B cell (primary cell): ENCODE measurements at regions of chr1 and their contacts with region 1.

Region 1: DNA sequence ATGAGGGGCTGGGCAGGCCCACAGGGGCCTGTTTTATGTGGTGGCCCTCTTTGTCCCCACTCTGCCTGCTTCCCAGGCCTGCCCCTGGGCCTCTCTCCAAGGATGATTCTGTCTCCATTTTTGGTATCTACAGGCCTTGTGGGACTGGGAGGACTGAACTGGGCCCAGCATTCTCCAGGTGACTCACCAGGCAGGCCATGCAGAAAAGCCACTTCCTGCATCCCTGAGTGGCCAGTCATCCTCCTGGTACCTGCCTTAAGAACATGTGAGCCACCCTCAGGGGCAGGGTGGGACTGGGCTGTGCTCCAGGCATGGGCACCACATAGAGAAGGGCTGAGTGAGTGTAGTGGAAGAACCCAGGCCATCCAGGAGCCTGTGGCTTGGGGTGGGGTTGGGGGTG is 20.0 kb upstream of the BCAR3 start:
- DNase-seq: no peak
- ATAC-seq: no peak
- H3K4me3 ChIP-seq: no peak overlapping the region
- H3K4me3 Mint-ChIP-seq: peak overlapping the region; percentile 26
- H3K27ac ChIP-seq: no peak overlapping the region
- H3K27ac Mint-ChIP-seq: peak overlapping the region; percentile 88
- H3K4me1 ChIP-seq: peaks cover 54 to 61% of the 10 kb centered on the region in 2 donors
- H3K4me1 Mint-ChIP-seq: peaks cover 62% of the 10 kb centered on the region
- H3K27me3 ChIP-seq: no peaks in the 10 kb centered on the region
- H3K27me3 Mint-ChIP-seq: no peaks in the 10 kb centered on the region
- CTCF ChIP-seq: no peak

Region 2: GRCh38 chr1:93328809-93329760 is 372.5 kb before region 1 on chr1:
- CTCF ChIA-PET with region 1: no interaction called
- POLR2A ChIA-PET with region 1: interaction called, 10 read pairs
- intact Hi-C with region 1: no loop called
- DNase-seq: no peak
- ATAC-seq: no peak
- H3K4me3 ChIP-seq: no peak overlapping the region
- H3K4me3 Mint-ChIP-seq: no peak overlapping the region
- H3K27ac ChIP-seq: no peak overlapping the region
- H3K27ac Mint-ChIP-seq: no peak overlapping the region
- H3K4me1 ChIP-seq: no peaks in the 10 kb centered on the region
- H3K4me1 Mint-ChIP-seq: no peaks in the 10 kb centered on the region
- H3K27me3 ChIP-seq: no peaks in the 10 kb centered on the region
- H3K27me3 Mint-ChIP-seq: no peaks in the 10 kb centered on the region
- CTCF ChIP-seq: no peak

Region 3: DNA sequence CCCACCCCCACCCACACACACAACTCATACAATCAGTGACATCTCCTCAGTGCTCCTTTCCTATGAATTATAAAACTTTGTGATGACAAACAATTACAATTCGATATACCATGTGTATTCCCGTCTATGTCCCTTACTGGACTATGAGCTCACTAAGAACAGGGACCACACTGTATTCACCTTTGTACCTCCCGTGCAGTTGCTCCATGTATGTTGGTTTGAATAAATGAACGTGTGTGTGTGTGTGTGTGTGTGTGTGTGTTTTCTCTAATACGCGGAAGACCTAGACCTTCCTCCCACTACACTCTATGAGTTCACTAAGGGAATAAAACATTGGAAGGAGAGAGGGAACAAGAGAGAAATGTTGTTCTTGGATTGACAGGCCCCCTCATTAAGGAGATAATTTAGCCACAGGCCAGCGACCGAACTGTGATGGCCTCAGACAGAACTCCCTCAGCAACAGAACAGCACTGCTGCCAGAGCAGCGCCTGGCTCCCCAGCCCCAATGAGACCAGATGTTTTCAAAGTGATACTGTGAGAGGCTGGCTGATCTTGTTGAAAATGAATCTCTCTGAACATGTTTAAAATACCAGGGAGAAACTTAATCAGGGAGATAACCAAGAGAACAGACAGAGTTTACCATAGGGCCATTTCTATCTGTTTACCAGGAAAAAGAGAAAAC is 41.7 kb before region 1 on chr1:
- CTCF ChIA-PET with region 1: no interaction called
- POLR2A ChIA-PET with region 1: no interaction called
- intact Hi-C with region 1: no loop called
- DNase-seq: no peak
- ATAC-seq: no peak
- H3K4me3 ChIP-seq: no peak overlapping the region
- H3K4me3 Mint-ChIP-seq: no peak overlapping the region
- H3K27ac ChIP-seq: no peak overlapping the region
- H3K27ac Mint-ChIP-seq: no peak overlapping the region
- H3K4me1 ChIP-seq: no peaks in the 10 kb centered on the region
- H3K4me1 Mint-ChIP-seq: peaks cover 20% of the 10 kb centered on the region
- H3K27me3 ChIP-seq: no peaks in the 10 kb centered on the region
- H3K27me3 Mint-ChIP-seq: no peaks in the 10 kb centered on the region
- CTCF ChIP-seq: no peak

Region 4: DNA sequence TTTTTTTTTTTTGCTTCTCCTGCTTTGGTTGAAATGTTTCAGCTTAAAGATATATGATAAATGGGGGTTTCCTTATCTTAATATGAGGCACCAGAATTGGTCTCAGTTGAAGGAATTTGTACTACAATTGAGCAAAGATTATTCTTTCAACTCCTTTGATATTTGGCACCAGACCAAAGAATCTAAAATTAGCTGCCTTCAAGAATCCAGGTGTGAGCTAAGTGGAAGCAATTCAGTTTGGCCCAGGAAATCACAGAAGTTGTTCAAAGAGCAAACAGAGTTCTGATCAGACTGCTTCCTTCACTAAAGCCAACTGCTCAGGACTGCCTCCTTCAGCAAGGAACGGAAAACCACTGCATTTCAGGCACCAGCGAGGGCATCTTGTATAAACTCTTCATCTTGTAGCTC is 48.3 kb after region 1 on chr1:
- CTCF ChIA-PET with region 1: interaction called, 6 read pairs
- POLR2A ChIA-PET with region 1: no interaction called
- intact Hi-C with region 1: loop called (anchors 1 kb)
- DNase-seq: peak; percentile 82
- ATAC-seq: peak; percentile 48
- H3K4me3 ChIP-seq: peak overlapping the region in 2 of 5 experiments; percentile 5 to 40
- H3K4me3 Mint-ChIP-seq: peak overlapping the region; percentile 73
- H3K27ac ChIP-seq: peak overlapping the region; percentile 86 to 87
- H3K27ac Mint-ChIP-seq: peak overlapping the region; percentile 93
- H3K4me1 ChIP-seq: peaks cover 34 to 41% of the 10 kb centered on the region in 2 donors
- H3K4me1 Mint-ChIP-seq: peaks cover 55% of the 10 kb centered on the region
- H3K27me3 ChIP-seq: no peaks in the 10 kb centered on the region
- H3K27me3 Mint-ChIP-seq: no peaks in the 10 kb centered on the region
- CTCF ChIP-seq: peak; percentile 56

Region 5: DNA sequence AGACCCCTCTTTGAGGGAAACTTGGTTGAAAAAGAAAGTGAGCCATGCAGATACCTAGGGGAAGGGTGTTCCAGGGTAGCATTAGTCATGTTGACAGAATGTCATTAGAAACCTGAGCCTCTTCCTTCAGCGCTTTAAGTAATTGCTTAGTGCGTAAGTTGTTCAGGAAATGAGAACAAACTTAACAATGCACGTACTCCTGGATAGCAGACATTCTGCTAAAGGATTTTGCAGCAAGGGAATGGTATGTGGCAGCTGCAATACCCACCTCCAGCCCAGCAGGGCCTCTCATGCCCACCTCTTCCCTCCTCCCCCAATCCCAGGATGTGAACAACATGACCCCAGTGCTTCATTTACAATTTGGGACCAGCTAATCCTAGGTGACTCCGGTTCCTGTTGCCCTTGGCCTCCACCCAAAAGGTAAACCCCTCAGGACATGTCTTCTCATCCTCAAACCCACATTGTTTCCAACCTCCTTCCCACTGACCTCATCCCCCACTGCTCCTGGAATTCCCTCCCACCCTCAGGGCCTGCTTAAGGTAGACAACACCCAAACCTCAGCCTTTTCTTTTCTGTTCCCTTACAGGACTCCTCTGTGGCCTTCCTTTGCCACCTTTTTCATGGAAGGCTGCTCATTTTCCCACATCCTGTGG is 78.0 kb after region 1 on chr1:
- CTCF ChIA-PET with region 1: no interaction called
- POLR2A ChIA-PET with region 1: no interaction called
- intact Hi-C with region 1: no loop called
- DNase-seq: no peak
- ATAC-seq: no peak
- H3K4me3 ChIP-seq: no peak overlapping the region
- H3K4me3 Mint-ChIP-seq: no peak overlapping the region
- H3K27ac ChIP-seq: no peak overlapping the region
- H3K27ac Mint-ChIP-seq: no peak overlapping the region
- H3K4me1 ChIP-seq: no peaks in the 10 kb centered on the region
- H3K4me1 Mint-ChIP-seq: no peaks in the 10 kb centered on the region
- H3K27me3 ChIP-seq: no peaks in the 10 kb centered on the region
- H3K27me3 Mint-ChIP-seq: no peaks in the 10 kb centered on the region
- CTCF ChIP-seq: no peak

Region 6: DNA sequence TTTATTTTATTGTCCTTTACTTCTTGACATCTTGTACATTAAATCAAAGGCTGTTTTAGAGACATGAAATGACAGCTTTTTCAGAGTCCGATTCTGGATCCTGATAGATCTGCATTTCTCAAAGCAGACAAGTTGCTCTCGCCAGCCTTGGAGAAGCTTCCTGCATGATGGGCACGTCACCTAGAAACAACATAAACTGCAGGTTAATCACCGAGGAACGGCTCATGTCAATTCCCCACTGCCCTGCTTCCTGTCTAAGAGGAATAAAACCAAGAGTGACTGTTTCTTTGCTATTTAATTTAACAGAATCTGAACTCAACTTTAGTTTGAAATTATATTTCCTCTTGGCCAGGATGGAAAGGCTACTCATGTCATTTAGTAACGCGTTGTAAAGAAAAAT is 1609.4 kb after region 1 on chr1:
- CTCF ChIA-PET with region 1: no interaction called
- POLR2A ChIA-PET with region 1: no interaction called
- intact Hi-C with region 1: no loop called
- DNase-seq: no peak
- ATAC-seq: no peak
- H3K4me3 ChIP-seq: no peak overlapping the region
- H3K4me3 Mint-ChIP-seq: no peak overlapping the region
- H3K27ac ChIP-seq: no peak overlapping the region
- H3K27ac Mint-ChIP-seq: no peak overlapping the region
- H3K4me1 ChIP-seq: no peaks in the 10 kb centered on the region
- H3K4me1 Mint-ChIP-seq: no peaks in the 10 kb centered on the region
- H3K27me3 ChIP-seq: peaks cover 0 to 8% (median 7%) of the 10 kb centered on the region in 4 experiments
- H3K27me3 Mint-ChIP-seq: peaks cover 14% of the 10 kb centered on the region
- CTCF ChIP-seq: no peak